Left cardiac atrium (tissue), 4 donors: ENCODE measurements at regions of chr16 and their contacts with region 1.

Region 1: GRCh38 chr16:21300309-21301167 is 22.4 kb upstream of the CRYM start:
- DNase-seq: peak; percentile 95
- ATAC-seq: peak; percentile 94

Region 2: DNA sequence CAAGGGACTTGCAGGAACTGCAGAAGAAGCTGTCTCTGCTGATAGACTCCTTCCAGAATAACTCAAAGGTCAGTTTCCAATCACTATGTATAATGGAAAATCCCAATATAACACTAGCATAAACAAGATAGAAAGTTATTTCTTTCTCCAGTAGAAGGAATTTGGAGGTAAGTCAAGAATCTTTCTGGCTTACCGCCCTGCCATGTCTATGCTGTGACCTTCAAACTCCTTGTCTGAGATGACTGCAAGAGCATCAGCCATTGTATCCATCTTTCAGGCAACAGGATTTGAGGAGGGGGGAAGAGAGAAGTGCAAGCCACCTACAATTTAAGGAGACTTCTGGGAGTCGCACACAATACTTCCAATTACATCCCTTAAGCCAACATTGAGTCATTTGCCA is 139.3 kb before region 1 on chr16:
- intact Hi-C with region 1: loop called in 1 of 2 experiments (anchors 2 kb)
- DNase-seq: no peak
- ATAC-seq: no peak

Region 3: DNA sequence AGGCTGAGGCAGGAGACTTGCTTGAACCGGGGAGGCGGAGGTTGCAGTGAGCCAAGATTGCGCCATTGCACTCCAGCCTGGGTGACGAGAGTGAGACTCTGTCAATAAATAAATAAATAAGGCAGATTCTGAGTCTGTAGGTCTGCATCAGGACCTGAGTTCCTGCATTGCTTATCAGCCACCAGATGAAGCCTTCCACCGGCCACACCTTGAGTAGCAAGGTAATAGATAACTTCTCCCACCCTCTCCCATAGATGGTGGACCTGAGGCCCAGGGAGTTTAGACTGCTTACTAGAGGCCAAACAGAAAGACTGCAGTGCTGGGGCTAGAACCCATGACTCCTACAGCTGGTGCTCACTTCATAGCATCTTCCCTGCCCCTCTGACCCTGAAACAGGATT is 111.2 kb before region 1 on chr16:
- intact Hi-C with region 1: loop called (anchors 2 to 5 kb)
- DNase-seq: no peak
- ATAC-seq: no peak

Region 4: DNA sequence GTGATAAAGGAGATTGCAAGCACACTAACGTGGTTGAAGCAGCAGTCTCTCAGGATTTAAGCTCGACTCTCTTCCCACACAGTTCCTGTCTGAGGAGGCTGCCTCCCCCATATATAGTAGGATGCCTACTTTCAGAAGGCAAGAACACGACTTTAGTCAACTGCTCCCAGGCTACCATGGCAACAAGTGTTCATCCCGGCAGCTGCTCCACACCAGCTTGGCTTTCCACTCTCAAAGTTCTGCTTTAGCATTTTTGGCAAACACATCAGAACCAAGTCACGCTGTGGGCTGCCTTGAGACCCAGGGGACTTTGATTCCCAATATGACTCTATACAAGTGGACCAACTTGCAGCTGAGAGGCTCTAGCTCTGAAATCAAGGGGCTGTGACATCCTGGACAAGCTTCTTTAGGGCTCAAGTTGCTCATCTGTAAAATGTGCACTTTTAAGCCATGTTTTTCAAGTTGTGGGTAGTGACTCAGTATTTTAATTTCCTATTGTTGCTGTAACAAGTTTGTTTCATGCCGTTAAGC is 105.7 kb before region 1 on chr16:
- intact Hi-C with region 1: loop called in 1 of 2 experiments (anchors 5 kb)
- DNase-seq: no peak
- ATAC-seq: no peak

Region 5: GRCh38 chr16:21554795-21555585 is 254.5 kb after region 1 on chr16:
- intact Hi-C with region 1: loop called in 1 of 2 experiments (anchors 10 kb)
- DNase-seq: peak; percentile 92
- ATAC-seq: peak; percentile 86 to 87